Activated CD4-positive, alpha-beta memory T cell treated with anti-CD3 and anti-CD28 coated beads, Interleukin-2, amount 10 ng/mL, durations not matched to agents 7 days and 5 days (primary cell): ENCODE measurements at regions of chr17 and their contacts with region 1.

Region 1: DNA sequence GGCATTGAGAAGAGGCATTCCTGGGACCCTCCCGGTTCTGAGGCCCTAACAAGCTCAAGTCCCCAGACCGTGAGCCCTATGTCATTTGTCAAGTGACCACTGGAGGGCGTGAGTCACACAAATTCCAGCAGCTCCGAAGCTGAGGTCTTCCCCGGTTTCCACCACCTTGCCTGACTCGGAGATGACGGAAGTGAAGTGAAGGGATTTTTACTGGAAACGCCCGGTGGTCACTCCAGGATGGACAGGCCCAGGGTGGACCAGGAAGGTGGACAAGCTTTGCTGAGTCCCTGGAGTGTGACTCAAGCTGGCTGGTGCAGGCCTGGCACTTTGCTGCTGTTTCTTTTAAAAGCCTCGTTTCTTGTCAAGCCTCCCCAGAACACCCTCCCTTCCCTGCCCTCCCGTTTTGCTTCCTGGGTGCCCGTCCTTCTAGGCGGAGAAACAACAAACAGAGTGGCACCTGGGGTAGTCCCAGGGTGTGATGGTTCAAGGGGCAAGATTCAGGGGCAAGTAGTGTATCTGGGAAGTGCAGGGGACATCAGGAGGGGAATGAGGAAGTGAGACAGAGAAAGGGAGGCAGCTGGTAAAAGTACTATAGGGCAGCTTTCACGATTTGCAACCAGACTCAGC is 5.3 kb upstream of the NOS2 start:
- DNase-seq: peak; percentile 87
- H3K4me3 Mint-ChIP-seq: peak overlapping the region; percentile 44
- H3K27ac Mint-ChIP-seq: peak overlapping the region; percentile 84
- H3K4me1 Mint-ChIP-seq: peaks cover 46% of the 10 kb centered on the region
- H3K27me3 Mint-ChIP-seq: no peaks in the 10 kb centered on the region

Region 2: DNA sequence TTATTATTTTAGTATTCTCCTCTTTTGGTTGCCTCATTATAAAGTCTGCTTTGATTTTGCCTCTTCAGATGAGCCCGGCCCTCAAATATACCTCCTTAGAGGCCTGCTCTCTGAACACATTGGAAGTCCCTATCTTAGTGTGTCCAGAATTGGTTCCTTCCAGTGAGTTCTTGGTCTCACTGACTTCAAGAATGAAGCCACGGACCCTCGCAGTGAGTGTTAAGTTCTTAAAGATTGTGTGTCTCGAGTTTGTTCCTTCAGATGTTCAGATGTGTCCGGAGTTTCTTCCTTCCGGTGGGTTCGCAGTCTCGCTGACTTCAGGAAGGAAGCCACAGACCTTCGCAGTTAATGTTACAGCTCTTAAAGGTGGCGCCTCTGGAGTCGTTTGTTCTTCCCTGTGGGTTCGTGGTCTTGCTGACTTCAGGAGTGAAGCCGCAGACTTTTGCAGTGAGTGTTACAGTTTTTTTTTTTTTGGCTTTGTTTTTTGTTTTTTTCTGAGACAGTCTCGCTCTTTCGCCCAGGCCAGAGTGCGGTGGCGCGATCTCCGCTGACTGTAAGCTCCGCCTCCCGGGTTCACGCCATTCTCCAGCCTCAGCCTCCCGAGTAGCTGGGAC is 40.5 kb after region 1 on chr17:
- CTCF ChIA-PET with region 1: interaction called, 21 read pairs
- POLR2A ChIA-PET with region 1: interaction called, 12 read pairs
- DNase-seq: peak; percentile 39
- H3K4me3 Mint-ChIP-seq: peak overlapping the region; percentile 56
- H3K27ac Mint-ChIP-seq: peak overlapping the region; percentile 78
- H3K4me1 Mint-ChIP-seq: peaks cover 26% of the 10 kb centered on the region
- H3K27me3 Mint-ChIP-seq: peaks cover 10% of the 10 kb centered on the region

Region 3: GRCh38 chr17:27858621-27859305 is 53.1 kb after region 1 on chr17:
- CTCF ChIA-PET with region 1: interaction called, 10 read pairs
- POLR2A ChIA-PET with region 1: no interaction called
- DNase-seq: no peak
- H3K4me3 Mint-ChIP-seq: no peak overlapping the region
- H3K27ac Mint-ChIP-seq: no peak overlapping the region
- H3K4me1 Mint-ChIP-seq: peaks cover 5% of the 10 kb centered on the region
- H3K27me3 Mint-ChIP-seq: peaks cover 8% of the 10 kb centered on the region

Region 4: GRCh38 chr17:27879987-27880608 is 74.5 kb after region 1 on chr17:
- CTCF ChIA-PET with region 1: interaction called, 383 read pairs
- POLR2A ChIA-PET with region 1: interaction called, 98 read pairs
- DNase-seq: peak; percentile 77
- H3K4me3 Mint-ChIP-seq: no peak overlapping the region
- H3K27ac Mint-ChIP-seq: no peak overlapping the region
- H3K4me1 Mint-ChIP-seq: peaks cover 23% of the 10 kb centered on the region
- H3K27me3 Mint-ChIP-seq: no peaks in the 10 kb centered on the region

Region 5: GRCh38 chr17:27929990-27930389 is 124.4 kb after region 1 on chr17:
- CTCF ChIA-PET with region 1: no interaction called
- POLR2A ChIA-PET with region 1: no interaction called
- DNase-seq: no peak
- H3K4me3 Mint-ChIP-seq: no peak overlapping the region
- H3K27ac Mint-ChIP-seq: no peak overlapping the region
- H3K4me1 Mint-ChIP-seq: no peaks in the 10 kb centered on the region
- H3K27me3 Mint-ChIP-seq: peaks cover 14% of the 10 kb centered on the region

Region 6: GRCh38 chr17:27980043-27980442 is 174.4 kb after region 1 on chr17:
- CTCF ChIA-PET with region 1: no interaction called
- POLR2A ChIA-PET with region 1: no interaction called
- DNase-seq: no peak
- H3K4me3 Mint-ChIP-seq: no peak overlapping the region
- H3K27ac Mint-ChIP-seq: no peak overlapping the region
- H3K4me1 Mint-ChIP-seq: no peaks in the 10 kb centered on the region
- H3K27me3 Mint-ChIP-seq: peaks cover 8% of the 10 kb centered on the region

Region 7: GRCh38 chr17:28252436-28252835 is 446.8 kb after region 1 on chr17:
- CTCF ChIA-PET with region 1: interaction called, 21 read pairs
- POLR2A ChIA-PET with region 1: interaction called, 3 read pairs
- DNase-seq: no peak
- H3K4me3 Mint-ChIP-seq: no peak overlapping the region
- H3K27ac Mint-ChIP-seq: no peak overlapping the region
- H3K4me1 Mint-ChIP-seq: peaks cover 9% of the 10 kb centered on the region
- H3K27me3 Mint-ChIP-seq: peaks cover 2% of the 10 kb centered on the region